H1 (cell line): ENCODE measurements at regions of chr6 and their contacts with region 1.

Region 1: GRCh38 chr6:5950361-5950785 is 56.4 kb downstream of the NRN1 start:
- DNase-seq: peak in 1 of 2 experiments; percentile 73
- H3K4me3 ChIP-seq: no peak overlapping the region
- H3K27ac ChIP-seq: no peak overlapping the region
- H3K4me1 ChIP-seq: no peaks in the 10 kb centered on the region
- H3K27me3 ChIP-seq: no peaks in the 10 kb centered on the region
- CTCF ChIP-seq: peak; percentile 70 to 92 (median 85)
- EP300 ChIP-seq: no peak
- POLR2A ChIP-seq: no peak
- RAD21 ChIP-seq: peak; percentile 45 to 61; a peak in 3 of 4 replicates

Region 2: GRCh38 chr6:5937169-5937909 is 13.0 kb before region 1 on chr6:
- CTCF ChIA-PET with region 1: interaction called, 12 read pairs
- POLR2A ChIA-PET with region 1: no interaction called
- DNase-seq: no peak
- H3K4me3 ChIP-seq: no peak overlapping the region
- H3K27ac ChIP-seq: no peak overlapping the region
- H3K4me1 ChIP-seq: no peaks in the 10 kb centered on the region
- H3K27me3 ChIP-seq: no peaks in the 10 kb centered on the region
- CTCF ChIP-seq: no peak
- EP300 ChIP-seq: no peak
- POLR2A ChIP-seq: no peak
- RAD21 ChIP-seq: no peak